Activated B cell treated with CpG ODN at 0.5 μM for 24 hours (primary cell): ENCODE measurements at regions of chr6 and their contacts with region 1.

Region 1: DNA sequence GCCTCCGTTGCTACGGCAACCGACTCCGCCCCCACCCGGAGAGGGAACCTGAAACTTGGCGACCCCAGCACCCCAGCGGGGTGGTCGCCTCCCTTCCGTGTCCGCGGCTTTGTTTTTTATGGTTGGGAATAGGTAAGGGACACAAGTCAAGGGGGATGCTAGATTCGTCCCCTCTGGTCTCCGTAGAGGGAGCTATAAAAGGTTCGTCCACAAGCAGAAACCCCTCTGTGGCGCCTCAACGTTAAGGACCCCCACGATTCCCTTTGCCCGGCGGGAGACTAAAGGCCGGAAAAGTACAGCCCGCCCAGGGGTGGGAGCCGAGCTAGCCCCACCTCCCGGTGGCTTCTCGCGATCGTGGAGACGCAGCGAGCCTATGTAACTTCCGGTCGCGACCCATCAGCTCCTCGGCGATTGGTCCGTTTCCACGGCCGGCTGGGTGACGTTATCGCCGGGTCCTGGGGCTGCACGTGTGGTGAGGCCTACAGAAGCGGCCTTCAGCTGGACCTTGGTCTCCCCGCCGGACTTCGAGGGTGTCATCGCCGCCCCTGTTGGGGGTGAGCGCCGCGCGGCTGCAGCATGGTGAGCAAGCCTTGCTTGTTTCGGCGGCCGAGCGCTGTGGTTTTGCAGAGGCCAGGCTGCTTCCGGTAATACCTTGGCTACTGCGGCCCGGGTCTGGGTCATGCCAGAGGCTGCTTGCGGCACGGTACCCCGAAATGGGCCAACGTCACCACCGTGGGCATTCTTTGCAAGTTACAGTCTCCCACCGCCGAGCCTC is at the start of gene LTV1:
- DNase-seq: peak; percentile 84
- ATAC-seq: peak; percentile 97
- H3K4me3 Mint-ChIP-seq: peak within 1 kb of the TSS; percentile 92
- H3K27ac Mint-ChIP-seq: peak within 1 kb of the TSS; percentile 96
- H3K4me1 Mint-ChIP-seq: peaks cover 17% of the 10 kb centered on the region
- H3K27me3 Mint-ChIP-seq: no peaks in the 10 kb centered on the region
- CTCF ChIP-seq: no peak
- total RNA-seq, gene LTV1: 37.0 and 40.3 TPM in 2 replicates

Region 2: DNA sequence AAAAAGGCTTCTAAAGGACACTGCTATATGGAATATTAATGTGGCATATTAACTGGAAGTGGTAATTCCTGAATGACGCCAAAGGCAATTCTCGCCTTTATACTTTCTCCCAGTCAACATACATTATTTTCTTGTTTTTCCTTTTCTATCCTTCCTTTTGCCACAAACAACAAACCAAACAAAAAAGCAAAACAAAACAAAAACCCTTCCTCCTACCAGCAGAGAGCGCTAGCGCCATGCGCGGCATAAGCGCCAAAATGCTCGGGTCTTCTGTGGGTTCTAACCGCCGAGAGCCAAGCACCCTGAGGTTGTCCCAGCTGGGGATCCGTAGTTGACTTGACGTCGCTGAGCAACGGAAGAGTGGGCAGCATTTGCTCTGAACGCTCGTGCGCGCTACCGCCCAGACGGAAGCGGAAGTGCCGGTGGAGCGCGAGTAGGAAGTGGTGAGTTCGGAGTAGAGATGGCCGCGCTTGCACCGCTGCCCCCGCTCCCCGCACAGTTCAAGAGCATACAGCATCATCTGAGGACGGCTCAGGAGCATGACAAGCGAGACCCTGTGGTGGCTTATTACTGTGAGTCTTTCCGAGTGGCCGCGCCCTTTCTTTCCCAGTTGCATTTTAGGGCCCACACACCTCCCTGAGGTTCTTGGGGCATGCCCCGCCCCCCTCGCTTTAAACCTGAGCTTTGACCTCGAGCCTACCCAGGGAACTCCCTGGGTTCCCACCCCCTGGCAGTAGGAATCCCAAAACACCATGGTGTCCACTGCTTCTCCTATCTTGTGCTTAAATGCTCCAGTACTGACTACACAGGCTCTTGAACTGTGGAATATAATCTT is 1696.0 kb before region 1 on chr6 and contains the starts of genes NMBR and VTA1:
- CTCF ChIA-PET with region 1: no interaction called
- POLR2A ChIA-PET with region 1: no interaction called
- intact Hi-C with region 1: loop called (anchors 1 kb)
- DNase-seq: peak; percentile 90
- ATAC-seq: peak; percentile 96
- H3K4me3 Mint-ChIP-seq: peak within 1 kb of the TSS; percentile 96
- H3K27ac Mint-ChIP-seq: peak within 1 kb of the TSS; percentile 78
- H3K4me1 Mint-ChIP-seq: peaks cover 54% of the 10 kb centered on the region
- H3K27me3 Mint-ChIP-seq: no peaks in the 10 kb centered on the region
- CTCF ChIP-seq: peak; percentile 16
- total RNA-seq, gene NMBR: not detected in 2 replicates
- total RNA-seq, gene VTA1: 30.3 and 30.4 TPM in 2 replicates

Region 3: GRCh38 chr6:143087856-143088255 is 755.2 kb before region 1 on chr6:
- CTCF ChIA-PET with region 1: no interaction called
- POLR2A ChIA-PET with region 1: no interaction called
- intact Hi-C with region 1: no loop called
- DNase-seq: no peak
- ATAC-seq: no peak
- H3K4me3 Mint-ChIP-seq: no peak overlapping the region
- H3K27ac Mint-ChIP-seq: no peak overlapping the region
- H3K4me1 Mint-ChIP-seq: no peaks in the 10 kb centered on the region
- H3K27me3 Mint-ChIP-seq: no peaks in the 10 kb centered on the region
- CTCF ChIP-seq: no peak

Region 4: GRCh38 chr6:143450453-143451371 is 392.4 kb before region 1 on chr6 and contains the starts of genes ADAT2 and PEX3:
- CTCF ChIA-PET with region 1: no interaction called
- POLR2A ChIA-PET with region 1: interaction called, 10 read pairs
- intact Hi-C with region 1: loop called (anchors 1 kb)
- DNase-seq: peak; percentile 90
- ATAC-seq: peak; percentile 91
- H3K4me3 Mint-ChIP-seq: peak within 1 kb of the TSS; percentile 98
- H3K27ac Mint-ChIP-seq: peak within 1 kb of the TSS; percentile 96
- H3K4me1 Mint-ChIP-seq: peaks cover 39% of the 10 kb centered on the region
- H3K27me3 Mint-ChIP-seq: no peaks in the 10 kb centered on the region
- CTCF ChIP-seq: no peak
- total RNA-seq, gene ADAT2: 22.4 and 30.2 TPM in 2 replicates
- total RNA-seq, gene PEX3: 21.7 and 26.5 TPM in 2 replicates

Region 5: GRCh38 chr6:143575440-143575839 is 267.6 kb before region 1 on chr6:
- CTCF ChIA-PET with region 1: interaction called, 8 read pairs
- POLR2A ChIA-PET with region 1: interaction called, 4 read pairs
- intact Hi-C with region 1: loop called (anchors 1 kb)
- DNase-seq: no peak
- ATAC-seq: peak; percentile 99
- H3K4me3 Mint-ChIP-seq: no peak overlapping the region
- H3K27ac Mint-ChIP-seq: no peak overlapping the region
- H3K4me1 Mint-ChIP-seq: no peaks in the 10 kb centered on the region
- H3K27me3 Mint-ChIP-seq: no peaks in the 10 kb centered on the region
- CTCF ChIP-seq: peak; percentile 26

Region 6: DNA sequence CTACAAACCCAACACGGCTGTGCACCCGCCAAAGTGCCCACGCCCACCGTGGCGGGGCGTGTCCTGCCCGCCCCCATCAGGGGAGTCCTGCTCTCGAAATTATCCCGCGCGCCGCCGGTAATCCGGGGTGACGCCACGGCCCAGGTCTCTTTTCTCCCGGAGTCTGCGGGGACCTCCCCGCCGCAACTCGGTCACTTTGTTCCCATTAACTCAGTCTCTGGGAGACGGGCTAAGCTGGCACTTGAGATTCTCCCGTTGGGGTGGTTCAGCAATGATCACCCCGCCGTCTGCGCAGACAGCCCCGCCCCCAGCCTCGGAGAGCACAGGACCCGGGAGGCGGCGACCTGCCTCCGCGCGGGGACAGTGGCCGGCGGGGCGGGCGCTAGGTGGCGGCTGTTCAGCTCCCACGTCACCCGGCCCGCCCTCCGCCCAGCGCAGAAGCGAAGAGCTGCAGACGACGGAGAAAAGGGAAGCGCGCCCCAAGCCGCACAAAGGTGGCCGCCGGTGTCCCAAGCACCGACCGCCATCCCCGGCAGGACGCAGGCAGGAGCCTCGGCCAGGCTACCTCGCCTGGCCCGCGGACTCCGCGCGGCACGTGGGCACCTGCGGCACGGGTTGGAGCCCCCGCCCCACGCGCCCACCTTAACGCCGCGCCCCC is 220.8 kb after region 1 on chr6:
- CTCF ChIA-PET with region 1: no interaction called
- POLR2A ChIA-PET with region 1: interaction called, 17 read pairs
- intact Hi-C with region 1: loop called (anchors 1 kb)
- DNase-seq: peak; percentile 91
- ATAC-seq: peak; percentile 93
- H3K4me3 Mint-ChIP-seq: peak overlapping the region; percentile 94
- H3K27ac Mint-ChIP-seq: peak overlapping the region; percentile 89
- H3K4me1 Mint-ChIP-seq: peaks cover 36% of the 10 kb centered on the region
- H3K27me3 Mint-ChIP-seq: no peaks in the 10 kb centered on the region
- CTCF ChIP-seq: no peak

Region 7: DNA sequence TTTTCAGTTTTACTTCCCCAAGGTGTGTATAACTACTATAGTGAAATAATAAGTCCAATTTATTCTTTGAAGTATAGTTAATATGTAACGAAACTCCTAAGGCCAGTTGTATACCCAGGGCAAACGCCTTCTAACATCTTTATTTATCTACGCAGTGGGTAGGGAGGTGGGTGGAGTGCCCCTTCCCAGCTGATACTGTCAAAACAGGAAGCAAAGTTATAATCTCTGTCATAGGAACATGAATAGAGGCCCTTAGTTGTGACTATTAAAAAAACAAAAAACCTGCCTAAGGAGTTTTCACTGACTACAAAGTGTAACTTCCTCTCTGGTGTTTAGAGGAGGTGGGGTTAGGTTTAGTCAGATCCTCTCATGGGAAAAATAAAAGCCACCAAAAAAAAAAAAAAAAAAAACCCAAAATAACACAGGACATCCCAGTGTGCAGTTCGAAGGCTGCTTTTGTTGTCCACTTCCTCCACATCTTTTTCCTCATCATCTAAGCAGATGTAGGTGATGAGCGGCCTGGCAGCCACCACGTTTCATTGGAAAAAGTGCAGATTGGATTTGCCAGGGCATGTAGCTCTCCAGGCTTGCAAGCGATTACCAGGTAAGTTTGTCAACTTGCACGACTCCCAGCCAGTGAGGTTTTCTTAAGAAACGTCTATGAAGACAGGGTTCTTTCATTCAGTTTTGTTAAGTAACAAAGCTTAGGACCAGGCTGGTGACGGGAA is 500.8 kb after region 1 on chr6:
- CTCF ChIA-PET with region 1: no interaction called
- POLR2A ChIA-PET with region 1: no interaction called
- intact Hi-C with region 1: loop called (anchors 5 kb)
- DNase-seq: no peak
- ATAC-seq: peak; percentile 80
- H3K4me3 Mint-ChIP-seq: peak overlapping the region; percentile 93
- H3K27ac Mint-ChIP-seq: peak overlapping the region; percentile 97
- H3K4me1 Mint-ChIP-seq: peaks cover 98% of the 10 kb centered on the region
- H3K27me3 Mint-ChIP-seq: no peaks in the 10 kb centered on the region
- CTCF ChIP-seq: no peak